Colonic mucosa (tissue), 4 donors: ENCODE measurements at regions of chr3 and their contacts with region 1.

Region 1: DNA sequence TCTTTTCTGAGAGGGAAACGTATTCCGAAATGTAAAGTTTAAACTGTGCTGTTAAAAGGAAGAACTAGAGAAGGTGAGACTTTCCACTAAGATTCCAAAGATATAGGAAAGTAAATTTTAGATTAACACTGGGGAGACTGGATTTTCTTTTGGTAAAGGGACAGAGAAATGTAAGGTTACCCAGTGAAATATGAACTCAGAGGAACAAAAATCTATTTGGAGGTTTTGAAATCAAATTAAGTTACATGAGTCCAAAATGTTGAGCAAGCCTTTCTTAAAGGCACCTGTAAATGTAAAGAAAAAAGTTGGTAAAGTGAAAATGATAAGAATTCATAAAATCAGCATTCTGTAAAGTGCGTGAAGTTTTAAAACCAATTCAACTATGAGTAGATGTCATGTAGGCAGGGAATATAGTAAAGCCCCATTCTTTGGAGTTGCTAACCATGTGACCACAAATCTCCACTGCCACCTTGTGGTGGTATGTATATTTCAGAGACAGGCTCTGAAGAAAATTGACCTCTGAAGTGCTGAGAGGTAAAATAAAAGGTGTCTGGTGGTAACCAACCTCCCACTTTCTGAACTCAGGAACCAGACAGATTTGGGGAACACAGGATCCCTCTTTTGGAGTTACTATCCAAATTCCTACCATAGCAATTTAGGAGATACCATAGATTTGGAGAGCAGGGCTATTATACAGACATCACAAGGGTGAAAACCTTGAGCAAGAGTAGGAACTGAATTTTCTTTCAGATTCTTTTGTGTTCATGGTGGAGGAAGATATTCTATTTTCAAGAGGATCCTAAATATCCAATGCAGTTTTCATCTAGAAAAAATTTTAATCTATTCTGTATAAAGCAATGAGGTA is 215.3 kb downstream of the ROBO2 start:
- DNase-seq: peak; percentile 44
- H3K4me3 ChIP-seq: no peak overlapping the region
- H3K27ac ChIP-seq: no peak overlapping the region
- H3K4me1 ChIP-seq: no peaks in the 10 kb centered on the region
- H3K27me3 ChIP-seq: no peaks in the 10 kb centered on the region
- CTCF ChIP-seq: peak; percentile 52

Region 2: GRCh38 chr3:77038468-77038929 is 216.7 kb before region 1 on chr3:
- intact Hi-C with region 1: loop called (anchors 5 kb)
- DNase-seq: peak; percentile 44
- H3K4me3 ChIP-seq: no peak overlapping the region
- H3K27ac ChIP-seq: no peak overlapping the region
- H3K4me1 ChIP-seq: no peaks in the 10 kb centered on the region
- H3K27me3 ChIP-seq: peaks cover 23% of the 10 kb centered on the region
- CTCF ChIP-seq: peak; percentile 47

Region 3: GRCh38 chr3:77460326-77460725 is 205.1 kb after region 1 on chr3:
- intact Hi-C with region 1: no loop called
- DNase-seq: no peak
- H3K4me3 ChIP-seq: no peak overlapping the region
- H3K27ac ChIP-seq: no peak overlapping the region
- H3K4me1 ChIP-seq: no peaks in the 10 kb centered on the region
- H3K27me3 ChIP-seq: no peaks in the 10 kb centered on the region
- CTCF ChIP-seq: no peak